ENCODE measurements at regions of chr5 and their contacts with region 1.

Region 1: DNA sequence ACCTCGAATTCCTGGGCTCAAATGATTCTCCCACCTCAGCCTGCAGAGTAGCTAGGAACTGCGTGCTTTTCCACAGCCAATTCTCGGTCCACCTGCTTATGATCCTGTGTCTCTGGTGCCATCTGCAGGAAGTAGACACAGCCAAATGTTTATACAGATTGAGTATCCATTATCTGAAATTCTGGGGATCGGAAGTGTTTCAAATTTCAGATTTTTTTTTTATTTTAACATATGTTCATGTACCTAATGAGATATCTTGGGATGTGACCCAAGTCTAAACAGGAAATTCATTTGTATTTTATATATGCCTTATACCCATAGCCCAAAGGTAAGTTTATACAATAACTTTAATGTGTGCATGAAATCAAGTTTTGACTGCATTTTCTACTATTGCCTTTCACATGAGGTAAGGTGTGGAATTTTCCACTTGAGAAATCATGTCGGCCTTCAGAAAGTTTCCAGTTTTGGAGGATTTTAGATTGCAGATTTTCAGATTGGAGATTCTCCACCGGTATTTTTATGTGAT is 89.5 kb downstream of the ESM1 start:
- DNase-seq: no peak
- ATAC-seq: peak; percentile 42
- H3K4me3 Mint-ChIP-seq: peak overlapping the region; percentile 58
- H3K27ac Mint-ChIP-seq: peak overlapping the region; percentile 23
- H3K4me1 Mint-ChIP-seq: peaks cover 5% of the 10 kb centered on the region
- H3K27me3 Mint-ChIP-seq: peaks cover 63% of the 10 kb centered on the region

Region 2: DNA sequence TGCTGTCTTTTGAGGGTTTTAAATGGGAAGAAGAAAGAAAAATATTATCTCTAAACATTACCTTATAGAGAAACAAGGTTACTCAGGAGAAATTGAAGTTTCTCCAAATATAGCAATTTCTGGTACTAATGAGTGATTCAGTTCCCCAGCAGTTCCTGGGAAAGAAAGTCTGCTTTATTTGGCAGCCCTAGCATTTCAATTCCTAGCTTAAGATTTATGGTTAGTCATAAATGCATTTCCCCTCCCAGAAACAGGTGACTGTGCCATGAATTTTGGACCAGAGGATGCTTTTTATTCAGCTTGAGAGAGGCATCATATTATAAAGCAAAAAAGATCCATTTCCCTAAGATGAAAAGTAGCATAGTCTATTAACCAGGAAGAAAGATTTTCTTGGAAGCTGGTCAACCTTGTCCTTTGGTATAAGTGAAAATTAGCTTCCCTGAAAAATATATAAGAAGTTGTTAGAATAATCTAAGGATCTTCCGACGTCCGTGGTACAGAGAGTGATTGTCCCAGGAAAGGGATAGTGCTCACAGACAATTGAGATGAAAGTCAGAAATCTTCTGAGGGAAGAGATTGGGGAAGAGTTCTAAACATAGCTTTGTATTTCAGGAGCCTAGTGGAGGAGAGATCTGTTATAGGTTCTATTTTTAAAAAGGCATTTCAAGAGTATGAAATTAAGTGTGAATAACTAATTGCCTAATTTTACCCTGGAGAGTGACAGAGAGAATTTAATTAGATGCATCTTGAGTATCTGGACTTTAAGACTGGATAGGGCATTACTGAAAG is 75.3 kb before region 1 on chr5:
- CTCF ChIA-PET with region 1: no interaction called
- DNase-seq: no peak
- ATAC-seq: no peak
- H3K4me3 Mint-ChIP-seq: no peak overlapping the region
- H3K27ac Mint-ChIP-seq: no peak overlapping the region
- H3K4me1 Mint-ChIP-seq: no peaks in the 10 kb centered on the region
- H3K27me3 Mint-ChIP-seq: peaks cover 10% of the 10 kb centered on the region

Region 3: DNA sequence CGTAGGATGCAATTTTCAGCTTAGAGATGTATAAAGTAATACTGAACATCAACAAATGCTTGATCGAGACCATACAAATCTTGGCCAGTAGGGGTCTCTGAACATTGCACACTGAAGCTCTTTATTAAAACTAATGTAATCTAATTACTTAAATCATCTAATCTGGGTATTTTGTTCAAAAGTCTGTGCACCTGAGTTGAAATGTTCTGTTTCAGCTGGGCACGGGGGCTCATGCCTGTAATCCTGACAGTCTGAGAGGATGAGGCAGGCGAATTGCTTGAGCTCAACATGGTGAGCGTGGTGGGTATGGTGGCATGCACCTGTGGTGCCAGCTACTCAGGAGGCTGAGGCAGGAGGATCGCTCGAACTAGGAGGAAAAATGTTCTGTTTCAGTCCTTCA is 48.5 kb after region 1 on chr5:
- CTCF ChIA-PET with region 1: no interaction called
- DNase-seq: peak; percentile 65
- ATAC-seq: peak; percentile 71
- H3K4me3 Mint-ChIP-seq: no peak overlapping the region
- H3K27ac Mint-ChIP-seq: no peak overlapping the region
- H3K4me1 Mint-ChIP-seq: peaks cover 14% of the 10 kb centered on the region
- H3K27me3 Mint-ChIP-seq: peaks cover 3% of the 10 kb centered on the region

Region 4: DNA sequence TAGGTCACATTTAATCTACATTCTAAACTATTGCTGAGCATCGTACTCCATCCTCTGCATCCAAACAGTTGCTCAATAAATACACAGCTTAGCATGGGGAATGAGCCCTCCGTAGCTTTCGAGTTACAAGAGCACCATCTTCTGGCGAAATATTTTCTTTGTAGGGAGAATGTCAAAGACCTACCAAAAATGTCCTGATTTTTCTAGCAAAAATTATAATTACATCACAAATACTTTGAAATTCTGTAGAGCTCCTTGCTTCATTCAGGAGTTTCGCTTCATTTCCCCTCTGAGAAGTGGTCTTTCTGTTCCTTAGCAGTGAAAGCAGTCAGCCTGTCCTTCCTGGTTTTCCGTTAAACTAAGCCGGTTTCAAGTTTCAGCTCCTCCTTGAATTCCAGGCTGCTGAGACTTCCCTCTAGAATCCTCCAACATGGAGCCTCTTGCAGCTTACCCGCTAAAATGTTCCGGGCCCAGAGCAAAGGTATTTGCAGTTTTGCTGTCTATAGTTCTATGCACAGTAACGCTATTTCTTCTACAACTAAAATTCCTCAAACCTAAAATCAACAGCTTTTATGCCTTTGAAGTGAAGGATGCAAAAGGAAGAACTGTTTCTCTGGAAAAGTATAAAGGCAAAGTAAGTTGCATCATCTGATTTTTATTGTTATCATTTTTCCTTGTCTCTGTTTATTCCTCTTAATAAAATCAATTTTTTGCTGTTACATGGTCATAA is 264.0 kb after region 1 on chr5 and contains the start of gene GPX8:
- CTCF ChIA-PET with region 1: interaction called, 143 read pairs
- DNase-seq: no peak
- ATAC-seq: peak; percentile 76
- H3K4me3 Mint-ChIP-seq: no peak within 1 kb of the TSS
- H3K27ac Mint-ChIP-seq: no peak within 1 kb of the TSS
- H3K4me1 Mint-ChIP-seq: peaks cover 4% of the 10 kb centered on the region
- H3K27me3 Mint-ChIP-seq: peaks cover 45% of the 10 kb centered on the region
- total RNA-seq, gene GPX8: not detected

Measured in activated CD8-positive, alpha-beta memory T cell treated with anti-CD3 and anti-CD28 coated beads, Interleukin-2, amount 10 ng/mL, durations not matched to agents 7 days and 5 days (primary cell).